ENCODE measurements at regions of chr1 and their contacts with region 1.

Region 1: DNA sequence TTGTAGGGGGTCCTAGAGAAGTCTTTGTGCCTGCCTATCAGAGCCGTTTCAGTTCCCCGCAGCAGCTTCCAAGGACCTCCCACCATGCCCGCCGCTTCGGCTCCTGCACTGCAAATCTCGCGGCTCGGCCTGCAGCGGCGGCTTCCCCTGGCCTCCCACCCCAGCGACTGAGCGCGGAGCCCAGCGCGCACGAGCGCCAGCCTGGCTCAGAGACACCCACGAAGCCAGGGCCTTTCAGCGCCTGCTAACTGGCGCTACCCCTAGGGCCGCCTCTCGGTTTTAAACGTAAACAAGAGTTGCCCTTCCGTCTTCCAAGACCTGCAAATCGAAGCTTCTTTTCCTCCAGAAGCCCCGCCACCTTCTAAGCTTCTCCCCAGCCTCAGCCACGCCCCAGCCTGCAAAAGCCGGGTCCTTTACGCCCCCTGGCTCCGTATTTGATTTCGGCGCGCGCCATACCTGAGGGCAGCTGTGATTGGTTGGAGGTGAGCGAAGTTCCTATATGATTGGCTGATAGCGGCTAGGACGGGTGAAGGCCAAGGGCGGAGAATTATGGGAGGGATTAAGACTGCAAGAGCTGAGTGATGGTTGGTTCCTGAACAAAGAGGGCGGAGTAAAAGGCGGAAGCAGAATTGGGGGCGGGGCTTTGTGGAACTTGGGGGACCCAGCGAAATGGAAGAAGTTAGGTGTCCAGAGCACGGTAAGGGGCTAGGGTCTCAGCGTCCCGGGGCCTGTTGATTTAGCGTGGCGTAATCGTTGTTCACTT is at the start of gene TTF2:
- DNase-seq: peak; percentile 99
- H3K4me3 ChIP-seq: peak within 1 kb of the TSS; percentile 90
- H3K27ac ChIP-seq: peak within 1 kb of the TSS; percentile 97
- H3K4me1 ChIP-seq: peaks cover 44% of the 10 kb centered on the region
- CTCF ChIP-seq: 0 out of 2 replicates have a peak, but pooled peaks have one; percentile 21
- total RNA-seq, gene TTF2: 81.3 and 82.6 TPM in 2 replicates

Region 2: GRCh38 chr1:116737020-116737854 is 322.6 kb before region 1 on chr1:
- CTCF ChIA-PET with region 1: no interaction called
- POLR2A ChIA-PET with region 1: interaction called, 6 read pairs
- intact Hi-C with region 1: loop called (anchors 1 kb)
- DNase-seq: peak; percentile 75
- H3K4me3 ChIP-seq: no peak overlapping the region
- H3K27ac ChIP-seq: no peak overlapping the region
- H3K4me1 ChIP-seq: peaks cover 31% of the 10 kb centered on the region
- CTCF ChIP-seq: peak; percentile 95

Region 3: GRCh38 chr1:117188170-117188815 is 128.4 kb after region 1 on chr1:
- CTCF ChIA-PET with region 1: no interaction called
- POLR2A ChIA-PET with region 1: no interaction called
- intact Hi-C with region 1: no loop called
- DNase-seq: no peak
- H3K4me3 ChIP-seq: no peak overlapping the region
- H3K27ac ChIP-seq: no peak overlapping the region
- H3K4me1 ChIP-seq: no peaks in the 10 kb centered on the region
- CTCF ChIP-seq: no peak

Region 4: GRCh38 chr1:117367047-117368018 is 307.5 kb after region 1 on chr1 and contains the start of gene MAN1A2:
- CTCF ChIA-PET with region 1: interaction called, 3 read pairs
- POLR2A ChIA-PET with region 1: interaction called, 5 read pairs
- intact Hi-C with region 1: loop called (anchors 5 kb)
- DNase-seq: peak; percentile 87
- H3K4me3 ChIP-seq: peak within 1 kb of the TSS; percentile 88
- H3K27ac ChIP-seq: peak within 1 kb of the TSS; percentile 74
- H3K4me1 ChIP-seq: peaks cover 40% of the 10 kb centered on the region
- CTCF ChIP-seq: no peak
- total RNA-seq, gene MAN1A2: 16.1 and 18.9 TPM in 2 replicates

Measured in OCI-LY7 (cell line).